ENCODE measurements at regions of chr19 and their contacts with region 1.

Region 1: GRCh38 chr19:5803752-5804515 is 933 bp upstream of the NRTN start:
- DNase-seq: peak; percentile 78
- ATAC-seq: peak; percentile 88
- H3K4me3 ChIP-seq: peak overlapping the region; percentile 39 to 48
- H3K27ac ChIP-seq: peak overlapping the region; percentile 7; the same call in 1 of the 2 replicates
- H3K4me1 ChIP-seq: peaks cover 5 to 24% of the 10 kb centered on the region in 2 experiments
- H3K27me3 ChIP-seq: no peaks in the 10 kb centered on the region
- CTCF ChIP-seq: peak; percentile 98 to 100 (median 100)
- POLR2A ChIP-seq: no peak
- RAD21 ChIP-seq: peak; percentile 97

Region 2: DNA sequence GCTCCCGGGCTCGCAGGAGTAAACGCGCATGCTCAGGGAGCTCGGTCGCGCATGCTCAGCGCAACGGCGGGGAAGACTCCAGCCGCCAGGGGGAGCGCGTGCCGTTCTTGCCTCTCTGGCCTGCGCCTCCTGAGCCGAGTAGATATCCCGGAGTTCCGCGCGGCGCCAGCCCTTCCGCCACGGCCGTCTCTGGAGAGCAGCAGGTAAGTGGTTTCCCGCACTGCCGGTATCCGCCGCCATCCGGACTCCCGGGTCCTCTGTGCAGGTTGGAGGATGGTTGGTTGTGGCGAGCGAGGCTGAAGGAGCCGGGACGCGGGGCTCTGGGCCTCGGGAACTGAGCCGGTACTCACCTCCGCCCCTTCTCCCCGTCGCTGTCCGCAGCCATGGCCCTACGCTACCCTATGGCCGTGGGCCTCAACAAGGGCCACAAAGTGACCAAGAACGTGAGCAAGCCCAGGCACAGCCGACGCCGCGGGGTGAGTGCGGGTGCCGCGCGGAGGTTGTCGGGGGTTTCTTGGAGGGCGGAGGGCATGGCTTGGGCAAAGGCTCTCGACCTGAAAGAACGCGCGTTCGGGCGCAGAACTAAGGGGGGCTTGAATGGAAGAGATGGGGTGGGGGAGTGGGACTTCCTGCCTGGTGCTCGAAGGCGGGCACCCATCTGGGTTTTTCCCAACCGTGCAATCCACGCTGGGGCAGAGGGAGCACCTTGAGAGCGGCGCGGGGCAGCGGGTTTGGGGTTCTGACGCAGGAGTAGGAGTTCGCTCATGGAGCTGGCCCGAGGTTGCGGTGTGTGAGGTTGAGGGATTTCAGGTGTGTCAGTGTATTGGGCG is 113.6 kb before region 1 on chr19 and contains the start of gene RPL36:
- CTCF ChIA-PET with region 1: interaction called, 13 read pairs
- POLR2A ChIA-PET with region 1: interaction called, 7 read pairs
- RAD21 ChIA-PET with region 1: interaction called in 1 of 2 experiments, 3 read pairs
- intact Hi-C with region 1: no loop called
- DNase-seq: peak; percentile 92
- ATAC-seq: peak; percentile 46
- H3K4me3 ChIP-seq: peak within 1 kb of the TSS; percentile 85 to 99
- H3K27ac ChIP-seq: peak within 1 kb of the TSS; percentile 93
- H3K4me1 ChIP-seq: peaks cover 11 to 48% of the 10 kb centered on the region in 2 experiments; a peak in 3 of 4 replicates
- H3K27me3 ChIP-seq: no peaks in the 10 kb centered on the region
- CTCF ChIP-seq: peak; percentile 83 to 96 (median 89)
- POLR2A ChIP-seq: peak; percentile 95
- RAD21 ChIP-seq: no peak
- total RNA-seq, gene RPL36: 1,504 TPM

Region 3: DNA sequence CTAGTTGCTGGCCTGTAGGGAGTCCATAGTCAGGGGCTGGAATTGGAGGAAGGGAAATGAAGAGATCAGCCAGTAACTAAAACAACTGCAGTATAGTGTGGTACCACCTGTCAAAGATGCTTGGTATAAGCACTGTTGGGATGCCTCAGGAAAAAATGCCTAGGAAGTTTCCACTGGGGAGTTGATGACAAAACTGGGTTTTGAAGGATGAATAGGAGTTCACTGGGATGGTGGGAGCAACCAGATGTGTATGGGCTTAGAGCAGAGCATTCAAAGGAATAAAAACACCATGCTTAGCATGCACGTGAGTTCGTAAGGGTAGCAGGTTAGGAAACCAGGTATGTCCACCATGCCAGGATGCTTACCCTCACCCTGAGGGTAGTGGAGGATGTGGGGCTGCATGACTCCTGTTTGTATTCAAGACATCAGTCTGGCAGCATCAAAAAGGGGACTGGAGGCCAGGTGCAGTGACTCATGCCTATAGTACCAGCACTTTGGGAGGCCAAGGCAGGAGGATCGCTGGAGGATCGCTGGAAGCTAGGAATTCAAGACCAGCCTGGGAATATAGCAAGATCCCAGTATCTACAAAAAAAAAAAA is 76.4 kb before region 1 on chr19:
- CTCF ChIA-PET with region 1: no interaction called
- POLR2A ChIA-PET with region 1: no interaction called
- RAD21 ChIA-PET with region 1: no interaction called
- intact Hi-C with region 1: no loop called
- DNase-seq: no peak
- ATAC-seq: no peak
- H3K4me3 ChIP-seq: no peak overlapping the region
- H3K27ac ChIP-seq: no peak overlapping the region
- H3K4me1 ChIP-seq: no peaks in the 10 kb centered on the region
- H3K27me3 ChIP-seq: no peaks in the 10 kb centered on the region
- CTCF ChIP-seq: no peak
- POLR2A ChIP-seq: no peak
- RAD21 ChIP-seq: no peak

Region 4: GRCh38 chr19:5790573-5791520 is 13.1 kb before region 1 on chr19 and contains the start of gene DUS3L:
- CTCF ChIA-PET with region 1: interaction called, 49 read pairs
- POLR2A ChIA-PET with region 1: interaction called, 7 read pairs
- RAD21 ChIA-PET with region 1: interaction called in 1 of 2 experiments, 4 read pairs
- intact Hi-C with region 1: no loop called
- DNase-seq: peak; percentile 97
- ATAC-seq: peak; percentile 91
- H3K4me3 ChIP-seq: peak within 1 kb of the TSS; percentile 72 to 85
- H3K27ac ChIP-seq: peak within 1 kb of the TSS; percentile 96
- H3K4me1 ChIP-seq: peaks cover 9 to 22% of the 10 kb centered on the region in 2 experiments; a peak in 3 of 4 replicates
- H3K27me3 ChIP-seq: no peaks in the 10 kb centered on the region
- CTCF ChIP-seq: no peak
- POLR2A ChIP-seq: peak; percentile 97
- RAD21 ChIP-seq: no peak
- total RNA-seq, gene DUS3L: 78.1 TPM

Region 5: GRCh38 chr19:5881543-5882299 is 77.8 kb after region 1 on chr19:
- CTCF ChIA-PET with region 1: interaction called, 15 read pairs
- POLR2A ChIA-PET with region 1: no interaction called
- RAD21 ChIA-PET with region 1: no interaction called
- intact Hi-C with region 1: no loop called
- DNase-seq: no peak
- ATAC-seq: no peak
- H3K4me3 ChIP-seq: no peak overlapping the region
- H3K27ac ChIP-seq: no peak overlapping the region
- H3K4me1 ChIP-seq: peaks cover 5 to 8% of the 10 kb centered on the region in 2 experiments
- H3K27me3 ChIP-seq: no peaks in the 10 kb centered on the region
- CTCF ChIP-seq: no peak
- POLR2A ChIP-seq: no peak
- RAD21 ChIP-seq: no peak

Region 6: GRCh38 chr19:5904352-5905113 is 100.6 kb after region 1 on chr19 and contains the start of gene VMAC:
- CTCF ChIA-PET with region 1: interaction called, 37 read pairs
- POLR2A ChIA-PET with region 1: interaction called, 4 read pairs
- RAD21 ChIA-PET with region 1: interaction called in 1 of 2 experiments, 6 read pairs
- intact Hi-C with region 1: no loop called
- DNase-seq: peak; percentile 100
- ATAC-seq: peak; percentile 82
- H3K4me3 ChIP-seq: peak within 1 kb of the TSS; percentile 100
- H3K27ac ChIP-seq: peak within 1 kb of the TSS; percentile 94
- H3K4me1 ChIP-seq: peaks cover 9 to 24% of the 10 kb centered on the region in 2 experiments; a peak in 3 of 4 replicates
- H3K27me3 ChIP-seq: no peaks in the 10 kb centered on the region
- CTCF ChIP-seq: no peak
- POLR2A ChIP-seq: peak; percentile 37
- RAD21 ChIP-seq: no peak
- total RNA-seq, gene VMAC: 2.1 TPM

Region 7: GRCh38 chr19:5961969-5962945 is 158.3 kb after region 1 on chr19:
- CTCF ChIA-PET with region 1: no interaction called
- POLR2A ChIA-PET with region 1: no interaction called
- RAD21 ChIA-PET with region 1: no interaction called
- intact Hi-C with region 1: no loop called
- DNase-seq: no peak
- ATAC-seq: no peak
- H3K4me3 ChIP-seq: no peak overlapping the region
- H3K27ac ChIP-seq: no peak overlapping the region
- H3K4me1 ChIP-seq: no peaks in the 10 kb centered on the region; a peak in 1 of 4 replicates
- H3K27me3 ChIP-seq: no peaks in the 10 kb centered on the region
- CTCF ChIP-seq: no peak
- POLR2A ChIP-seq: no peak
- RAD21 ChIP-seq: no peak

Region 8: DNA sequence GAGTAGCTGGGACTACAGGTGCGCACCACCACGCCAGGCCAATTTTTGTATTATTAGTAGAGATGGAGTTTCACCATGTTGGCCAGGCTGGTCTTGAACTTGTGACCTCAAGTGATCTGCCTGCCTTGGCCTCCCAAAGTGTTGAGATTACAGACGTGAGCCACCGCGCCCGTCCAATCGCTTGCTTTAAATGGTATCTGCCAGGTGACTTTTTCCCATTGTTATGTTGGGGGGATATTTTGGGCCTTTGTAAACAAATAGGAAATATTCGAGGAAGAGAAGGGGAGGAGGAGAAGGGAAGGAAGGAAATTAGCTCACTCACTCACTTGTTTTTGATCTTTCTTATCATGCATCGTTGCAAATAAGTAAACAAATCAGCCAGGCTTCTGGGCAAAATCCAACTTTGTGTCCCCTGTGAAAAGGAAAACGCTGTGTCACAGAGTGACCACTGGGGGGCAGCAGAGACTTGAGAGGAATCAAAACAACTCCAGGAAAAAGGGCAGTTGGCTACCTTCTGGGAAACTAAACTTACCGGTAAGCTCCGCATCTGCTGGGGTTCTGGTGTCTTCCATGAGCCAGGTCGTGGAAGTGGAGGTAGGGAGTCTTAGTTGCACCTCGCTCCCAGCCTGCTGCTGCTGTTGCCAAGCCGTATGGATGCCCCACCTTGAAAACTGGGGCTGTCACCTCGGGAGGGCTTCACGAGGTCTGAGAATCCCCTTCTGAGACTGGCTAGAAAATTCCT is 183.3 kb after region 1 on chr19:
- CTCF ChIA-PET with region 1: interaction called, 11 read pairs
- POLR2A ChIA-PET with region 1: no interaction called
- RAD21 ChIA-PET with region 1: no interaction called
- intact Hi-C with region 1: no loop called
- DNase-seq: peak; percentile 60
- ATAC-seq: peak; percentile 61
- H3K4me3 ChIP-seq: no peak overlapping the region
- H3K27ac ChIP-seq: no peak overlapping the region
- H3K4me1 ChIP-seq: peaks cover 0 to 19% of the 10 kb centered on the region in 2 experiments; a peak in 2 of 4 replicates
- H3K27me3 ChIP-seq: no peaks in the 10 kb centered on the region
- CTCF ChIP-seq: peak; percentile 88 to 94 (median 93); a peak in 5 of 6 replicates
- POLR2A ChIP-seq: no peak
- RAD21 ChIP-seq: peak; percentile 85